HEK293T (cell line): ENCODE measurements at regions of chr4 and their contacts with region 1.

Region 1: DNA sequence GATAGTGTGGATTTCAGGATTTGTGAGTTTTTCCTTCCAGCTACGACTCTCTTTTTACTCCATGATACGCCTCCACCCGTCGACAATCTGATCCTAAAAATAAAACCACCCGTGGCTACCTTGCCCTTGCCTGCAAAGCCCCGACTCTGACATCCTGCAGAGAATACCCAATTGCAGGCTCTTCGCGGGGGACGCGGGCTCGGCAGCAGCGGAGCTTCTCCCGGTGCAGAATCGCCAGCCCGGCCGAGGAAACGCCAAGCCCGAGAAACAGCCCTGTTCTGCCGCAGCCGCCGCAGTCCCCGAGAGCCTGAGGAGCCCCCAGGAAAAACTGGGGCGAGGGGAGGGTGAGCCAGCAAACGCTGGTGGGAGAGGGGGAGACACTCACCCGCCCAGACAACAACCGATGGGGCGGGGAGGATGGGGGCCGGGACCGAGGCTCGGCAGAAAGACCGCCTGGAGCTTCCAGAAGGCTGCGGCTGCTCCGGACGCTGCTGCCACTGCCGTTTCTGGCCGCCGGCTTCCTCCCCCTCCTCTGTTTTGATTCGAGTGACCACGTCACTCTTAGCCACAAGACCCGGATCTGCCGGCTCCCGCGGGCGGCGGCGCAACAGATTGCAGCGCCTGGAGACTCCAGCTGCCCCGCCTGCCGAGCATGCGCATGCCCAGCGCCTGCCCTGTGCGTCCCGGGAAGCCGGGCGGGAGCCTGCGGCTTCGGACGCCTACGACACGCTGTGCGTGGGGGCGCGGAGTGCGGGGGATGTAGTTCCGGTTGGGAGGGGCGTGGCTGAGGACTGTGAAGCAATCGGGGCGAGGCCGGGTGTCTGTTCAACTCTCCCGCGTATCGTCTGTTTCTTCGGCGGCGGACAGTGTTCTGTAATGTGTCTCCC is at the start of gene SMIM14:
- DNase-seq: peak; percentile 91

Region 2: DNA sequence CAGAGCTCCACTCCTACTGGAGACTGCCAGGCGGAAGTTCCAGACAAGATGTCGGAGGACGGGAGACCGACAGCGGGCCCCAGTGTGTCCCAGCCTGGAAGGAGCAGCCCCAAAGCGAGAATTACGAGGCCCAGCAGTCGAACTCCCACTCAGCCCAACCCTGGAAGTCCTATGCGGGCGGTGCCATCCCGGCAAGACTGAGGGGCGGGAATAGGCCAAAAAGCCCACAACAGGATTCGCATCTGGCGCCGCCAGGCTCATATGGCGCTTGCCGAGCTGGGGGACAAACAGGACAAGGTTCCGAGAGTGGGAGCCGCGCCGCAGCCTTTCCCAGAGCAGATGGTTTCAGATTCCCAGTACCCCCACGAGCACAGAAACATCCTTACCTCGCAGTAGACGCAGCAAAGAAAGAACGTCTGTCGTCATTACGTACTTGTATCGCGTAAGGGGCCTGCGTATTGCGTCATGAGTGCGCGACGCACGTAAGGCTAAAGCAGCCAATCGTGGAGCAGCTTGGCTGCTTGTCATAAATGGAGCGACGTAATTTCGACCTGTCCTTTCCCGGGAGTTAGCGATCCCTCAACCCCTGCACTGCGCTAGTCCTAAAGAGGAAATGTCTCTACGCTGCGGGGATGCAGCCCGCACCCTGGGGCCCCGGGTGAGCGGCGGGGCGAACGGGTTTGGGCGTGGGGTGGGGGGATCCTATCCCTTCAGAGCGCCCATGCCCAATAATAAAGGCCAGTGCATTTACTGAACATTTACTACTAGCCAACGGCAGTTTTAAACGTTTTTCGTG is 179.9 kb before region 1 on chr4 and contains the starts of genes LIAS and RPL9:
- CTCF ChIA-PET with region 1: no interaction called
- POLR2A ChIA-PET with region 1: interaction called, 10 read pairs
- DNase-seq: peak; percentile 85

Region 3: DNA sequence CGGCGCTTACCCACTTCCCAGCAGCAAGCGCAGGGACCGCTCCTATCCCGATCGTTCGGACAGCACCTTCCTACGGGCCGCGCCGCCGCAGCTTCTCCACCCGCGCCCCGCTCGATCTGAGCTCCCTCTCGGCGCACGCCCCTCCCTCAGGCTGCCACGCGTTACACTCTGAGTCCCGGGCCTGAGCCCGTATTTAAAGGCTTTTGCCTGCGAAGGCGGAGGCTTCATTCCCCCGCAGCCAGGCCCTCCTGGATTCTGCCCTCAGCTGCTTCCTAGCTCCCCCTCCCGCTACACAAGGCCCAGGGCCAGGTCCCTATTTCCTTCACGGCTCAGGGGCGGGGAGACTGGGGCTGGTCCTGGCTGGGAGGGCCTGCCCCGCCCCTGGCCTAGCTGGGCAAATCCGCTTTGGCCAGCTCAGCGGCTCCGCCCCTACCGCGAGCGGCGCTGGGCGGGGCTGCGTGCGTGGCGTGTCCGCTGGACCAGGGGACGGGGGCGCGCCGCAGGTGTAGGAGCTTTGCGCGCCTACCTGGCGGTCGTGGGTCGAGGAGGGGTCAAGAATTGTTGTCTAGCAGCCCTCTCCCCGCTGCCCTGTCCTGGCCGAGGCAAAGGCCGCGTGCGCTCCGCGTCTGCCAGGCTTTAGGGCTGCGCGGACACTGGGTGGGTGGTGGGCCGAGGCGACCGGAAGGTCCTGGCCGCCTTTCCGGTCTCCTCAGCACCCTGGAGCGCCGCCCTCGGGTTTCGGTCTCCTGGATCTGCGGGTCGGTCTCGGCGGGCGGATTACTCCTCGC is 111.1 kb before region 1 on chr4 and contains the start of gene UGDH:
- CTCF ChIA-PET with region 1: no interaction called
- POLR2A ChIA-PET with region 1: interaction called, 20 read pairs
- DNase-seq: peak; percentile 87

Region 4: GRCh38 chr4:39621582-39621981 is 17.0 kb before region 1 on chr4:
- CTCF ChIA-PET with region 1: no interaction called
- POLR2A ChIA-PET with region 1: interaction called, 10 read pairs
- DNase-seq: no peak

Region 5: GRCh38 chr4:39648815-39649558 is 10.4 kb after region 1 on chr4:
- CTCF ChIA-PET with region 1: interaction called, 5 read pairs
- POLR2A ChIA-PET with region 1: interaction called, 13 read pairs
- DNase-seq: no peak

Region 6: DNA sequence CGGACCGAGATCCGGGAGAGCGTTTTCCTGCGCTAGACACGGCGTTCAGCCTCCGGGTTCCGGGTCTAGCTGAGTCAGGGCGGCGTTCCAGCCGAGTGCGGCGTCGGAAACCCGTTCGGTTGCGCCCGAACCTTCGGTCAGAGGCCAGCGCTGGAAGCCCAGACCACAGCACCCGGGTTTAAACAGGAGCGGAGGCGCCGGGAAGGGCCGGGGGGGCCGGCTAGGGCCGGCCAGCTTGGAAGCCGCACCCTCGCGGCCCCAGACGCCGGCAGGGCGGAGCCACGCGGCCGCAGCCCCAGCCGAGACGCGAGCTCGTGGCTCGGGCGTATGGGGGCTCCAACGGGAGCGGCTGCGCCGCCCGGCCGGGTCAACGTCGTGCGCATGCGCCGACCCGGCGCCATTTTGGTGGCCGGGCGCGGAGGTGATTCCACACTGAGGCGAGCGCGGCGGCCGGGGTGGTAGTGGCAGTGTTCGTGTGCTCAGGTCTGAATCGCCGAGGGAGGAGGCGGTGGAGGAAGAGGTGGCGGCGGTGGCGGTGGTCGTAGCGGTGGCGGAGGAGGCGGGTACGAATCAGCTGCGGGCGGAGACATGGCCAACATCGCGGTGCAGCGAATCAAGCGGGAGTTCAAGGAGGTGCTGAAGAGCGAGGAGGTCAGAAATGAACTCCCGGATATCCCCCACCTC is 59.3 kb after region 1 on chr4 and contains the start of gene UBE2K:
- CTCF ChIA-PET with region 1: no interaction called
- POLR2A ChIA-PET with region 1: interaction called, 11 read pairs
- DNase-seq: peak; percentile 85